Activated naive CD4-positive, alpha-beta T cell treated with anti-CD3 and anti-CD28 coated beads for 36 hours (primary cell): ENCODE measurements at regions of chr11 and their contacts with region 1.

Region 1: DNA sequence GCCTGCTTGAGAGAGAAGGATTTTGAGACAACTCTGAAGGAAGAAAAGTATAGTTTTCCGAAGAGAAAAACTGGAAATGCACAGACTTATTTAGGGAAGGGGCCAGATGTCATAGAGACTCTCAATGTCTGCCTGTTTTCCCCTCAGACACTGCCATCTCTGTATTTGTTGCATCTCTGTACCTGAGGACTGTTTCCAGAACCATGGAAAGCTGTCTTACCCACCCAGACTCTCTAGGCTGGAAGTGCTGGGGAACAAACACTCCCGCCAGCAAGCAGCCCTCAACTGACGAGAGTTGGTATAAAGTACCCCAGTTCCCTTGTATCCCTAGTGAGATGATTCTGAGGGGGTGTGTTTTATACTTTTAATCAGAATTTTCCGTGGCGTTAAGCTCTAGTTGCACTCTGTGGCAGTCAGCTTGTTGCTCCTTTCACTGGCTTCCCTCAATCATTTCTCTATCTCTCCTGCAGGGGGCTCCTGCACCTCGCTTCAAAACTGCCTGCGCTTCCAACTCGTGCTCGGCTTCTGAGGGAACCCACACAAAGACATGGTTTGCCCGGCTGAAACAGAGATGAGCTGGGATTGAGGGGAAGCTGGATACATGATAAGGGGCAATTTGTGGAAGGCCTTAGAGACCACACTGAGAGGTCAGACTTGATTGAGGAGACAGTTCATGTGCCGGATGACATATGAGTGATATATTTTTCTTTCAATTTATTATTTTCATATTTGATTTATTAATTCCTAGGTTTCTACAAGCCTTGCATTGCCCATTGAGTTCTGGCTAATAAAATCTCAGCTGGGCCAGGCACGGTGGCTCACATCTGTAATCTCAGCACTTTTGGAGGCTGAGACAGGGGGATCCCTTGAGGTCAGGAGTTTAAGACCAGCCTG is 36.9 kb upstream of the CLPB start:
- DNase-seq: peak; percentile 73
- H3K4me3 Mint-ChIP-seq: peak overlapping the region; percentile 32
- H3K27ac Mint-ChIP-seq: no peak overlapping the region
- H3K4me1 Mint-ChIP-seq: peaks cover 2% of the 10 kb centered on the region
- H3K27me3 Mint-ChIP-seq: peaks cover 19% of the 10 kb centered on the region

Region 2: DNA sequence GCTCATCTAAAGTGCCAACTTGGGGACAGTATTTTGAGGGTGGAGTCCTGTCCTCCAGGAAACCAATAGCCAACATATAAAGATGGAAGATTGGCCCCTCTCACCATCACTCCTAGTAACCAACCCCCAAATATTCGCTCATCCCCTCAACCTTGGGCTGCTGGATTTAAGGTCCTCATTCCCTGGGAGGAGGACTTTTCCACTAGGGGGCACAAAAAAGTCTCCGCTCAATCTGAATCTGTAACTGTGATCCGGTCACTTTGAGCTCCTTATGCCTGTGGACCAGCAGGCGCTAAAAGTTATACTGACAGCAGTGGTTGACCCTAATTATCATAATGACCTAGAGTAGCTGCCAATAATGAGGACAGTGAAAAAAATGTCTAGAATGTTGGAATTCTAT is 16.5 kb before region 1 on chr11:
- CTCF ChIA-PET with region 1: interaction called, 15 read pairs
- intact Hi-C with region 1: no loop called
- DNase-seq: no peak
- H3K4me3 Mint-ChIP-seq: no peak overlapping the region
- H3K27ac Mint-ChIP-seq: no peak overlapping the region
- H3K4me1 Mint-ChIP-seq: no peaks in the 10 kb centered on the region
- H3K27me3 Mint-ChIP-seq: peaks cover 1% of the 10 kb centered on the region

Region 3: DNA sequence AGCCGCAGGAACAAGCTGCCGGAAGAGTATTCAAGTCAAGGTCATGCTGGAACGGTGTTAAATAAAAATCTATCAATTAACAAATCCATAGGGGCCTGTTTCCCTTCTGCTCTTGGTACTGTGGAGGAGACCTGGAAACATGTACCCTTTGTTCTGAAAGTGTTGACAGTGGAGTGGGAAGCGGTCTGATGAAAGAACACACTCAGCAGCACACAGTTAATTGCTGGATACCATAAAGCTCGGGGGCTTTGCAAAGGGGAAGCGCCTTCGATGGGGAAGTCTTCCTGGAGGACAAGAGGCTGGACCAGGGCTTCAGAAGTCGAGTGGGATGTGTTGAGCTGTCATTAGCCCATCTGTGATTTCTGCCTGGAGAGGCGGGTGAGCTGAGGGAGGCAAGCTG is 75.6 kb after region 1 on chr11:
- CTCF ChIA-PET with region 1: interaction called, 23 read pairs
- intact Hi-C with region 1: no loop called
- DNase-seq: no peak
- H3K4me3 Mint-ChIP-seq: no peak overlapping the region
- H3K27ac Mint-ChIP-seq: no peak overlapping the region
- H3K4me1 Mint-ChIP-seq: no peaks in the 10 kb centered on the region
- H3K27me3 Mint-ChIP-seq: no peaks in the 10 kb centered on the region

Region 4: DNA sequence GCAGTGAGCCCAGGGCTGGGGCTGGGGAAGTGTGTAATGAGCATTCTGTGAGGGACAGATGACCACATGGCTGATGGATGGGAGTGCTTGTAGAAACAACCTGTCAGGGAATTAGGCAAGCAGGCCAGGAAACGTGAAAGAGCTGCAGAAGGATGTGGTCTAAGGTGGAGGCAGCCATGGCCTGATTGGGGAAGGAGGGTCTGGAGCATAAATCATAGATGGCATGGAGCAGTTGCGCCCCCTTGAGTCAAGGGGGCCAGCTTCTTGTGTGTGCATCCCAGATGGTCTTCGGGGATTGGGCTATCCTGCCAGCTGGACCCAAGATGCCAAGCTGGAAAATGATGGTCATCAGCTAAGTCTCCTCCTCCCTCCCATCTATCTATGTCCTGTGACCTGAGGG is 82.5 kb after region 1 on chr11:
- CTCF ChIA-PET with region 1: interaction called, 21 read pairs
- intact Hi-C with region 1: loop called (anchors 1 kb)
- DNase-seq: peak; percentile 54
- H3K4me3 Mint-ChIP-seq: no peak overlapping the region
- H3K27ac Mint-ChIP-seq: no peak overlapping the region
- H3K4me1 Mint-ChIP-seq: no peaks in the 10 kb centered on the region
- H3K27me3 Mint-ChIP-seq: peaks cover 5% of the 10 kb centered on the region

Region 5: DNA sequence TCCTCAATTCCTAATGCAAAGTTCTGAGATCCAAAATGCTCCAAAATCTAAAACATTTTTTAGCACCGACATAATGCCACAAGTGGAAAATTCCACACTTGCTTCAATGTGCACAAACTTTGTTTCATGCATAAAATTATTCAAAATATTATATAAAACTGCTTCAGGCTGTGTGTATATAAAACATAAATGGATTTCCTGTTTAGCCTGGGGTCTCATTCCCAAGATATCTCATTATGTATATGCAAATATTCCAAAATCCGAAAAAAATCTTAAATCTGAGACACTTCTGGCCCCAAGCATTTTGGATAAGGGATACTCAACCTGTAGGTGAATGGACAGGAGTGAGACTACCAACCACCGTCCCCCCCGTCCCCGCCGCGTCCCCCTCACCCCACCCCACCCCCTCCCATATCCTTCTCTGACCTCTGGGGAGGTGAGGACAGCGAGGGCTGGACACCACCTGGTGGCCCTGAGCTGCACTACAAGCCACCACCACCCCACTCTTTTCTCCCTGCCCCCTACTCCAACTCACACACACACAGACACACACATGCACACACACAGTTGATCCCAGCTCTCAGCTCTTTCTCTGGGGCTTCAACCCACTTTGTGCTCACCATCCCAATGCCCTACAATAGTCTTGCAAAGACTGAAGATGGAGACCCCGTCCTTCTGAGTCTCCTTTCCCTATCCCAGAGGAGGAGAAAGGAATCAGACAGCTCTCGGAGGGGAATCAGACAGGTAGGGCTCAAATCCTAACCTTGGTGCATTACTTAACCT is 102.0 kb after region 1 on chr11:
- CTCF ChIA-PET with region 1: interaction called, 16 read pairs
- intact Hi-C with region 1: loop called (anchors 1 kb)
- DNase-seq: peak; percentile 43
- H3K4me3 Mint-ChIP-seq: no peak overlapping the region
- H3K27ac Mint-ChIP-seq: no peak overlapping the region
- H3K4me1 Mint-ChIP-seq: no peaks in the 10 kb centered on the region
- H3K27me3 Mint-ChIP-seq: peaks cover 6% of the 10 kb centered on the region

Region 6: GRCh38 chr11:72683782-72684200 is 212.5 kb after region 1 on chr11:
- CTCF ChIA-PET with region 1: interaction called, 12 read pairs
- intact Hi-C with region 1: no loop called
- DNase-seq: peak; percentile 81
- H3K4me3 Mint-ChIP-seq: no peak overlapping the region
- H3K27ac Mint-ChIP-seq: no peak overlapping the region
- H3K4me1 Mint-ChIP-seq: peaks cover 13% of the 10 kb centered on the region
- H3K27me3 Mint-ChIP-seq: no peaks in the 10 kb centered on the region